Activated B cell treated with CpG ODN at 0.5 μM for 24 hours (primary cell): ENCODE measurements at regions of chr3 and their contacts with region 1.

Region 1: GRCh38 chr3:88003115-88003755 is 55.6 kb downstream of the CGGBP1 start:
- DNase-seq: no peak
- ATAC-seq: no peak
- H3K4me3 Mint-ChIP-seq: no peak overlapping the region
- H3K27ac Mint-ChIP-seq: no peak overlapping the region
- H3K4me1 Mint-ChIP-seq: peaks cover 10% of the 10 kb centered on the region
- H3K27me3 Mint-ChIP-seq: no peaks in the 10 kb centered on the region
- CTCF ChIP-seq: peak; percentile 62

Region 2: GRCh38 chr3:87161417-87161816 is 841.8 kb before region 1 on chr3:
- CTCF ChIA-PET with region 1: no interaction called
- POLR2A ChIA-PET with region 1: no interaction called
- intact Hi-C with region 1: no loop called
- DNase-seq: no peak
- ATAC-seq: no peak
- H3K4me3 Mint-ChIP-seq: no peak overlapping the region
- H3K27ac Mint-ChIP-seq: no peak overlapping the region
- H3K4me1 Mint-ChIP-seq: no peaks in the 10 kb centered on the region
- H3K27me3 Mint-ChIP-seq: peaks cover 6% of the 10 kb centered on the region
- CTCF ChIP-seq: no peak

Region 3: DNA sequence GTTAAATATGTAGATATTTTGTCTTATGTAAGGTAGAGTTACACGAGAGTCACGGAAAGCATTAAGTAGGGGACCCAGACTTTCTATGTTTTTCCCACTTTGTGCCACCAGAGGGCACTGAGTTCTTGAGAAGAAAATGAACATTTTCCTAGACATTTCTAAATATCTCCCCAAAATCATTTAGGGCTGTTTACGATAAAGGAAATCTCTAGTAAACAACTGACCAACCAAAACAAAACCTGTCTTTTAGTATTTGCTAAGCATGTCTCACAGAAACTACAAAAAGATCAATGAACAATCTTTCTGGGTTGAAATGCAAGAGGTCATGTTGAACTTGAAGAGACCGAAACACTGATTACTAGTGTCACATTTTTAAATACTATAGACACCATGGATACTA is 743.0 kb before region 1 on chr3:
- CTCF ChIA-PET with region 1: no interaction called
- POLR2A ChIA-PET with region 1: no interaction called
- intact Hi-C with region 1: loop called (anchors 2 kb)
- DNase-seq: no peak
- ATAC-seq: peak; percentile 45
- H3K4me3 Mint-ChIP-seq: no peak overlapping the region
- H3K27ac Mint-ChIP-seq: no peak overlapping the region
- H3K4me1 Mint-ChIP-seq: peaks cover 4% of the 10 kb centered on the region
- H3K27me3 Mint-ChIP-seq: no peaks in the 10 kb centered on the region
- CTCF ChIP-seq: peak; percentile 24

Region 4: DNA sequence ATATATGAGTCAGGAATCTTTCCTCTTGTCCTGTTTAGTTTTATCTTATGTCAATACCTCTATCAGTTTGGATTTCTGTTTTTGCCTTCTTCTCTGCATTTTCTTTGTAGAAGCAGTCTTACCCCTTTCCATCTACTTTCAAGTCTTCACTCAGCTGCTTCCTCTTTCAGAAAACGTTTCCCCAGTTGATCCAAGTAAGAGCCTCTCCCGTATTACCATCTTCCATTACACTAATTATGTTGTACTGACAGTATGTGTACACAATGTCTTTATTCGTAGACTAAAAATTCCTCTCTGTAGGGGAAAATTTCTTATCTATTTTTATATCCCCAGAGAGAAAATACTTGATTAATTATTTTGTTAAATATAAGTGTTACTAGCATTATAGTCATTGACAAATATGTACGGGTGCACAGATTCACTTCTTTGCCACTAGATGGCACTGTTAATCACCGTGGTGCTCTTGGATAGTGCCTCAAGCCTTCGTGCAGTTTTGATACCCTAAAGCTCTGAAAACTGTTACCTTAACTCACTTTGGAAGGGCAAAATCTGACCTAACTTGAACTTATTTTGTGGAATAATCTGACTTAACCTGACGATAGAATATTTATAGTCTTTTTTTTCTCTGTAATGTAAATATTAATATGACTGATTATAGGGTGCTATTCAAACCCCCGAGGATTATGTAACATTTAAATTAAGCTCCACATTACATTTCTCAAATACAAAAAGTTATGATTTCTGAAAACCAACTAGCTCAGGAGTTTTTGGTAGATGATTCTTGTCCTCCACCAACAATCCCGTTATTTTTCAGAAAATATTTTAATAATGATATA is 652.7 kb before region 1 on chr3:
- CTCF ChIA-PET with region 1: interaction called, 56 read pairs
- POLR2A ChIA-PET with region 1: no interaction called
- intact Hi-C with region 1: loop called (anchors 1 kb)
- DNase-seq: no peak
- ATAC-seq: peak; percentile 75
- H3K4me3 Mint-ChIP-seq: no peak overlapping the region
- H3K27ac Mint-ChIP-seq: no peak overlapping the region
- H3K4me1 Mint-ChIP-seq: no peaks in the 10 kb centered on the region
- H3K27me3 Mint-ChIP-seq: peaks cover 4% of the 10 kb centered on the region
- CTCF ChIP-seq: peak; percentile 86

Region 5: DNA sequence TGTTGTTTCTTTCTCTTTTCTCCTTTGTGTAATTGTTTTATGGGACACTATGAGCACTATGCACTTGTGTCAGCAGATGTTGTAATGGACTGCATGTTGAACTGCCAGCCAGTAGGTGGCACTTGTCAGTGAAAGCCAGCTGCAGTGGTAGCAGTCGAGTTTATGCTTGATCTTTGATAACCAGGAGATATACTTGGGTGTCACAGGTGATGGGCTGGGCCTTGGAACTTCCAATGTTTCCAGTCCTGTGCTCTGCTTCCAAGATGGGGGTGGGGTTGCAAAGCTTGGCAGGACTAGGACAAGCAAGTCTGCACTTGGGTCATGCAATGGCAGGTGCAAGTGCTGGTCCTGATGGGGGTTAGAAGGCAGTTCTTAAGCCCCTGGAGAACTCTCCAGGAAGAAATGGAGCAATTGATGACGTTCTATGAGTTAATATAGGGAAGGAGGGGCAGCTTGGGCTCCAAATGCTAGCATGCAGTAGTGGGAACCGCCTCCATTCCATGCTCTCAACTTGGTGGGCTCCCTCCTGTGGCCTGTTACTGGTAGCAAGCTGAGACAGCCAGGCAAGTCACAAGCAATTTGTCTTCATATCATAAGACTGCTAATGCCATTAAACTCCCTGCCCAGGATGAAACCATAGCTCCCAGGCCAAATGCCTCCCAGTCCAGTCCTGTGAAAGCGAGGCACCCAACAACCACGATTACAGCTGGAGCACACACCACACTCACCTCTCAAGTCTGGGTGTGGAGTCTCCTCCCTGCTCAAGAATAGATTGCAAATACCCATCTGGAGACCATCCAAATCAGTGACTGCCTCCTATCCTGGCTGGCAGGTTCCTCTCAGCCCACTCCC is 231.7 kb before region 1 on chr3:
- CTCF ChIA-PET with region 1: interaction called, 33 read pairs
- POLR2A ChIA-PET with region 1: no interaction called
- intact Hi-C with region 1: loop called (anchors 1 kb)
- DNase-seq: no peak
- ATAC-seq: peak; percentile 75
- H3K4me3 Mint-ChIP-seq: no peak overlapping the region
- H3K27ac Mint-ChIP-seq: no peak overlapping the region
- H3K4me1 Mint-ChIP-seq: no peaks in the 10 kb centered on the region
- H3K27me3 Mint-ChIP-seq: peaks cover 11% of the 10 kb centered on the region
- CTCF ChIP-seq: no peak

Region 6: DNA sequence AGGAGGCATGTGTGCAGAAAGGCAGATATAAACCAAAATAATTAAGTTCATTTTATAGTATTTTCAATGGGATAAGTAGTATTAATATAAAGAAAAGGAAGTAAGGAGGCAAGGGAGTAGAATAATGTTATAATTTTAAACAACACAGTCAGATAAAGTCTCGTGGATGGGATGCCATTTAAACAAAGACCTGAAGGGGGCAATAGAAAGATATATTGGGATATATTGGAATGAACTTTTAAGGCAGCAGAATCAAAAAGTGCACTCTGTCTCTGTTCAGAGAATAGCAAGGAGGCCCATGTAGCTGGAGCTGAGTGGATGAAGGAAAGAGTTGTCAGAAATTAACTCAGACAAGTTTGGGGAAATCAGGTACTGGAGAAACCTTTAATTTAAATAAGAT is 103.2 kb before region 1 on chr3:
- CTCF ChIA-PET with region 1: interaction called, 4 read pairs
- POLR2A ChIA-PET with region 1: no interaction called
- intact Hi-C with region 1: loop called (anchors 1 kb)
- DNase-seq: no peak
- ATAC-seq: no peak
- H3K4me3 Mint-ChIP-seq: no peak overlapping the region
- H3K27ac Mint-ChIP-seq: no peak overlapping the region
- H3K4me1 Mint-ChIP-seq: no peaks in the 10 kb centered on the region
- H3K27me3 Mint-ChIP-seq: no peaks in the 10 kb centered on the region
- CTCF ChIP-seq: no peak

Region 7: GRCh38 chr3:88025001-88025552 is 21.8 kb after region 1 on chr3:
- CTCF ChIA-PET with region 1: no interaction called
- POLR2A ChIA-PET with region 1: no interaction called
- intact Hi-C with region 1: no loop called
- DNase-seq: no peak
- ATAC-seq: no peak
- H3K4me3 Mint-ChIP-seq: no peak overlapping the region
- H3K27ac Mint-ChIP-seq: no peak overlapping the region
- H3K4me1 Mint-ChIP-seq: peaks cover 5% of the 10 kb centered on the region
- H3K27me3 Mint-ChIP-seq: no peaks in the 10 kb centered on the region
- CTCF ChIP-seq: no peak

Region 8: GRCh38 chr3:88180398-88180999 is 177.3 kb after region 1 on chr3:
- CTCF ChIA-PET with region 1: no interaction called
- POLR2A ChIA-PET with region 1: no interaction called
- intact Hi-C with region 1: loop called (anchors 5 kb)
- DNase-seq: no peak
- ATAC-seq: no peak
- H3K4me3 Mint-ChIP-seq: no peak overlapping the region
- H3K27ac Mint-ChIP-seq: no peak overlapping the region
- H3K4me1 Mint-ChIP-seq: no peaks in the 10 kb centered on the region
- H3K27me3 Mint-ChIP-seq: no peaks in the 10 kb centered on the region
- CTCF ChIP-seq: no peak